ENCODE measurements at regions of chr1 and their contacts with region 1.

Region 1: GRCh38 chr1:169630006-169630405 is at the start of gene SELP:
- DNase-seq: no peak
- ATAC-seq: no peak
- H3K4me3 ChIP-seq: no peak within 1 kb of the TSS
- H3K4me3 Mint-ChIP-seq: peak within 1 kb of the TSS in 4 of 10 donors; percentile 2 to 63 (median 23)
- H3K27ac ChIP-seq: no peak within 1 kb of the TSS
- H3K27ac Mint-ChIP-seq: peak within 1 kb of the TSS in 7 of 9 donors; percentile 32 to 88 (median 84)
- H3K4me1 ChIP-seq: peaks cover 0 to 51% of the 10 kb centered on the region in 2 donors
- H3K4me1 Mint-ChIP-seq: peaks cover 27 to 69% (median 58%) of the 10 kb centered on the region in 7 donors
- H3K27me3 ChIP-seq: no peaks in the 10 kb centered on the region
- H3K27me3 Mint-ChIP-seq: no peaks in the 10 kb centered on the region
- total RNA-seq, gene SELP: 0.27 to 3.2 (median 2.3) TPM

Region 2: GRCh38 chr1:169363046-169363730 is 266.8 kb before region 1 on chr1:
- CTCF ChIA-PET with region 1: no interaction called
- POLR2A ChIA-PET with region 1: no interaction called
- intact Hi-C with region 1: no loop called
- DNase-seq: peak in 1 of 9 donors; percentile 45
- ATAC-seq: no peak
- H3K4me3 ChIP-seq: no peak overlapping the region
- H3K4me3 Mint-ChIP-seq: peak overlapping the region in 1 of 10 donors; percentile 61
- H3K27ac ChIP-seq: no peak overlapping the region
- H3K27ac Mint-ChIP-seq: peak overlapping the region in 5 of 9 donors; percentile 5 to 64 (median 53)
- H3K4me1 ChIP-seq: peaks cover 0 to 6% of the 10 kb centered on the region in 2 donors
- H3K4me1 Mint-ChIP-seq: peaks cover 5 to 31% (median 15%) of the 10 kb centered on the region in 7 donors
- H3K27me3 ChIP-seq: no peaks in the 10 kb centered on the region
- H3K27me3 Mint-ChIP-seq: no peaks in the 10 kb centered on the region

Region 3: GRCh38 chr1:169511316-169512028 is 118.5 kb before region 1 on chr1:
- CTCF ChIA-PET with region 1: no interaction called
- POLR2A ChIA-PET with region 1: no interaction called
- intact Hi-C with region 1: no loop called
- DNase-seq: no peak
- ATAC-seq: no peak
- H3K4me3 ChIP-seq: no peak overlapping the region
- H3K4me3 Mint-ChIP-seq: no peak overlapping the region
- H3K27ac ChIP-seq: no peak overlapping the region
- H3K27ac Mint-ChIP-seq: no peak overlapping the region
- H3K4me1 ChIP-seq: peaks cover 0 to 9% of the 10 kb centered on the region in 2 donors
- H3K4me1 Mint-ChIP-seq: peaks cover 0 to 19% (median 12%) of the 10 kb centered on the region in 7 donors
- H3K27me3 ChIP-seq: no peaks in the 10 kb centered on the region
- H3K27me3 Mint-ChIP-seq: no peaks in the 10 kb centered on the region

Region 4: DNA sequence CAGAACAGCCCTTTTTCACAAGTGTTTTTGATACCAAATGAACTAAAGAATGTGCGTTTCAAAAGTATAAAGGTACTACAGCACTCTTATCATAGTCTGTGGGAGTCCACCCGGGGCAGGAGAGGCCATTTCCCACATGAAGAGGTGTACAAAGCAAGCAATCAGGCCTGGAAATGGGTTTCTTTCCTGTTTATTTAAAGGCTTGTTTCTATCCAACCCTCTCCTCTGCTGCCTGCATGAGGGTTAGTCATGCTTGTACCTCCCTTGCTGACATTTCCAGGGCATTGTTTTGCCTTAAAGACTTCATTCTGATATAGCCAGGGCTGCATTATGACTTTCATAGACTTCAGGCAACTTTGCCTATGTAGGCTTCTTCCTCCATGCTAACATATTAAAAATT is 11.6 kb before region 1 on chr1:
- CTCF ChIA-PET with region 1: no interaction called
- POLR2A ChIA-PET with region 1: interaction called, 20 read pairs
- intact Hi-C with region 1: loop called in 1 of 2 experiments (anchors 1 kb)
- DNase-seq: no peak
- ATAC-seq: no peak
- H3K4me3 ChIP-seq: no peak overlapping the region
- H3K4me3 Mint-ChIP-seq: no peak overlapping the region
- H3K27ac ChIP-seq: no peak overlapping the region
- H3K27ac Mint-ChIP-seq: peak overlapping the region in 2 of 9 donors; percentile 3 to 76
- H3K4me1 ChIP-seq: peaks cover 4 to 8% of the 10 kb centered on the region in 2 donors
- H3K4me1 Mint-ChIP-seq: peaks cover 8 to 72% (median 51%) of the 10 kb centered on the region in 7 donors
- H3K27me3 ChIP-seq: no peaks in the 10 kb centered on the region
- H3K27me3 Mint-ChIP-seq: no peaks in the 10 kb centered on the region

Region 5: DNA sequence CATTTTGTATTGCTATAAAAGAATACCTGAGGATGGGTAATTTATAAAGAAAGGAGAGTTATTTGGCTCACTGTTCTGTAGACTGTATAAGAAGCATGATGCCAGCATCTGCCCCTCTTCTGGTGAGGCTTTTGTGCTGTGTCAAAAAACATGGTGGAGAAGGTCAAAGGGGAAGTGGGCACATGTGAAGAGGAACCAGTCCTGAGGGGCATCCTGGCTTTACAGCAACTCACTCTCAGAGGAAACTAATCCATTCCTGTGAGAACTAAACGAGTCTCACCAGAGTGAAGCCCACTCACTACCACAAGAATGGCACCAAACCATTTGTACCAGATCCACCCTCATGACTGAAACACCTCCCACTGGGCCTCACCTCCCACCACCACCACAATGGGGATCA is 18.7 kb after region 1 on chr1:
- CTCF ChIA-PET with region 1: interaction called, 4 read pairs
- POLR2A ChIA-PET with region 1: interaction called, 25 read pairs
- intact Hi-C with region 1: loop called in 1 of 2 experiments (anchors 2 kb)
- DNase-seq: no peak
- ATAC-seq: no peak
- H3K4me3 ChIP-seq: no peak overlapping the region
- H3K4me3 Mint-ChIP-seq: peak overlapping the region in 8 of 10 donors; percentile 10 to 74 (median 62)
- H3K27ac ChIP-seq: peak overlapping the region; percentile 17
- H3K27ac Mint-ChIP-seq: peak overlapping the region in 8 of 9 donors; percentile 65 to 94 (median 88)
- H3K4me1 ChIP-seq: peaks cover 14 to 28% of the 10 kb centered on the region in 2 donors
- H3K4me1 Mint-ChIP-seq: peaks cover 18 to 55% (median 46%) of the 10 kb centered on the region in 7 donors
- H3K27me3 ChIP-seq: no peaks in the 10 kb centered on the region
- H3K27me3 Mint-ChIP-seq: no peaks in the 10 kb centered on the region